Natural killer cell (primary cell): ENCODE measurements at regions of chr3 and their contacts with region 1.

Region 1: DNA sequence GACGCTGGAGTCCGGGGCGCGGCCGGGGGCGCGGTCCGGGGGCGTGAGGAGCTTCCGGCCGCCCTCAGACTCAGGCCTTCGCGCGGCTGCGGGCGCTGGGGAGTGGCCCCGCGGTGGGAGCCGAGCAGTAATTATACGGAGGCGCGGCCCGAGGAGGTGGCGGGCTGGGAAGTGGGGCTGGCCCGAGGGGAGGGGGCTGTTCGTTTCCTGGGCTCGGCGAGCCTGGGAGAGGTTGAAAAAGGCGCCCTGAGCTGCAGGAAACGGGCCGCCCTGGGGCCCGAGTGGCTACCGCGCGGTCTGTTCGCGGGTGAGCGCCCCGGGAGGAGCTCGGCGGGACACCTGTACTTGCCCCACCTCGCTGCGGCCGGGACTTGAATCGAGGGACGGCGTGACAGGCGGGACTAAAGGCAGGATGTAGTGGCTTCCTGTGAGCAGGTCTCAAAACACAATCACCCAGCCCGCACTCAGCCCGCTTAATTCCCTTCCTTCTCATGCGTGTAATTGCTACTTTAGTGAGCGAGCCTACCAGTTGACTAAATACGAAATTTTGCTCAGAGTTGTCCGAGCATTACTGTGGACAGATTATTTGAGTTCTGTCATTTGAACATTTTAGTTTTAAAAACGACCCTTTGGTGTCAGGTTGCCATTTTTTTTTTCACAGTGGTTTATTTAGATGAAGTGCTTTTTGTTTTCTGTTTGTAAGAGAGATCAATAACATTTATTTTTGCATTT is 860 bp downstream of the RASA2 start:
- DNase-seq: peak; percentile 81 to 93
- ATAC-seq: peak; percentile 62 to 78 (median 70)
- H3K4me3 ChIP-seq: peak overlapping the region; percentile 86
- H3K4me3 Mint-ChIP-seq: peak overlapping the region; percentile 94
- H3K27ac ChIP-seq: peak overlapping the region; percentile 95
- H3K27ac Mint-ChIP-seq: peak overlapping the region in 1 of 2 donors; percentile 92
- H3K4me1 ChIP-seq: peaks cover 30% of the 10 kb centered on the region
- H3K4me1 Mint-ChIP-seq: peaks cover 72 to 73% of the 10 kb centered on the region in 2 donors
- H3K27me3 ChIP-seq: no peaks in the 10 kb centered on the region
- H3K27me3 Mint-ChIP-seq: no peaks in the 10 kb centered on the region
- CTCF ChIP-seq: no peak

Region 2: GRCh38 chr3:141498598-141499223 is 11.0 kb after region 1 on chr3:
- intact Hi-C with region 1: loop called (anchors 1 kb)
- DNase-seq: peak; percentile 86 to 97
- ATAC-seq: peak; percentile 76 to 91 (median 90)
- H3K4me3 ChIP-seq: peak overlapping the region; percentile 22
- H3K4me3 Mint-ChIP-seq: peak overlapping the region; percentile 89
- H3K27ac ChIP-seq: peak overlapping the region; percentile 90
- H3K27ac Mint-ChIP-seq: peak overlapping the region in 1 of 2 donors; percentile 92
- H3K4me1 ChIP-seq: peaks cover 23% of the 10 kb centered on the region
- H3K4me1 Mint-ChIP-seq: peaks cover 69% of the 10 kb centered on the region in 2 donors
- H3K27me3 ChIP-seq: no peaks in the 10 kb centered on the region
- H3K27me3 Mint-ChIP-seq: no peaks in the 10 kb centered on the region
- CTCF ChIP-seq: no peak

Region 3: GRCh38 chr3:141553055-141553454 is 65.4 kb after region 1 on chr3:
- intact Hi-C with region 1: loop called (anchors 2 kb)
- DNase-seq: peak in 1 of 2 donors; percentile 74
- ATAC-seq: peak; percentile 75 to 81 (median 80)
- H3K4me3 ChIP-seq: no peak overlapping the region
- H3K4me3 Mint-ChIP-seq: peak overlapping the region; percentile 60
- H3K27ac ChIP-seq: peak overlapping the region; percentile 47
- H3K27ac Mint-ChIP-seq: peak overlapping the region; percentile 76 to 77
- H3K4me1 ChIP-seq: peaks cover 6% of the 10 kb centered on the region
- H3K4me1 Mint-ChIP-seq: peaks cover 41 to 49% of the 10 kb centered on the region in 2 donors
- H3K27me3 ChIP-seq: no peaks in the 10 kb centered on the region
- H3K27me3 Mint-ChIP-seq: no peaks in the 10 kb centered on the region
- CTCF ChIP-seq: no peak

Region 4: GRCh38 chr3:142447852-142448823 is 960.5 kb after region 1 on chr3 and contains the start of gene XRN1:
- intact Hi-C with region 1: loop called (anchors 5 kb)
- DNase-seq: peak; percentile 96 to 97
- ATAC-seq: peak; percentile 94 to 99 (median 96)
- H3K4me3 ChIP-seq: peak within 1 kb of the TSS; percentile 96
- H3K4me3 Mint-ChIP-seq: peak within 1 kb of the TSS; percentile 100
- H3K27ac ChIP-seq: peak within 1 kb of the TSS; percentile 97
- H3K27ac Mint-ChIP-seq: peak within 1 kb of the TSS; percentile 99 to 100
- H3K4me1 ChIP-seq: peaks cover 12% of the 10 kb centered on the region
- H3K4me1 Mint-ChIP-seq: peaks cover 45 to 46% of the 10 kb centered on the region in 2 donors
- H3K27me3 ChIP-seq: no peaks in the 10 kb centered on the region
- H3K27me3 Mint-ChIP-seq: no peaks in the 10 kb centered on the region
- CTCF ChIP-seq: no peak
- total RNA-seq, gene XRN1: 116 to 141 (median 128) TPM